ENCODE measurements at regions of chr16 and their contacts with region 1.

Region 1: DNA sequence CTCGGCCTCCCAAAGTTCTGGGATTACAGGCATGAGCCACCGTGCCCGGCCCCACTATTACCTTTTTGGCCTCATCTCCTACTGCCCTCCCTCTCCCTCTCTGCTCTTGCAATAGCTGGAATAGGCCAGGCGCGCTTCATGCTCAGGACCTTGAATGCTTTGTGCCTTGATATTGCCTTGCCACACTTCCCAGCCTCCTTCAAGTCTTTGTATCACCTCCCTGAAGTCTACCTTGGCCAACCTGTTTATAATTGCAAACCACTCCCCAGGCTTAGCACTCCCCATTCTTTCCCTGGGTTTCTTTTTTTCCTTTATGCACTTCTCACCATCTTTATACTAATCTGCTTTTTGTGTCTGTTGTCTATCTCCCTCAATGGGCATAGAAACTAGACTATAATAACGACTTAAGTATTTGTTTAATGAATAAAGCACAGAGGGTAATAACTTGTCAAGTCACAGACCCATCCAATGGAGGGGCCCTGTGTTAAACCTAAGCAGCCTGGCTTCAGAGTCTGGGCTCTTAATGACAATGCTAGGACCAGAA is 6.6 kb downstream of the OGFOD1 start:
- DNase-seq: no peak
- ATAC-seq: no peak

Region 2: GRCh38 chr16:56481468-56482112 is 23.6 kb after region 1 on chr16:
- intact Hi-C with region 1: loop called (anchors 2 kb)
- DNase-seq: no peak
- ATAC-seq: no peak

Region 3: DNA sequence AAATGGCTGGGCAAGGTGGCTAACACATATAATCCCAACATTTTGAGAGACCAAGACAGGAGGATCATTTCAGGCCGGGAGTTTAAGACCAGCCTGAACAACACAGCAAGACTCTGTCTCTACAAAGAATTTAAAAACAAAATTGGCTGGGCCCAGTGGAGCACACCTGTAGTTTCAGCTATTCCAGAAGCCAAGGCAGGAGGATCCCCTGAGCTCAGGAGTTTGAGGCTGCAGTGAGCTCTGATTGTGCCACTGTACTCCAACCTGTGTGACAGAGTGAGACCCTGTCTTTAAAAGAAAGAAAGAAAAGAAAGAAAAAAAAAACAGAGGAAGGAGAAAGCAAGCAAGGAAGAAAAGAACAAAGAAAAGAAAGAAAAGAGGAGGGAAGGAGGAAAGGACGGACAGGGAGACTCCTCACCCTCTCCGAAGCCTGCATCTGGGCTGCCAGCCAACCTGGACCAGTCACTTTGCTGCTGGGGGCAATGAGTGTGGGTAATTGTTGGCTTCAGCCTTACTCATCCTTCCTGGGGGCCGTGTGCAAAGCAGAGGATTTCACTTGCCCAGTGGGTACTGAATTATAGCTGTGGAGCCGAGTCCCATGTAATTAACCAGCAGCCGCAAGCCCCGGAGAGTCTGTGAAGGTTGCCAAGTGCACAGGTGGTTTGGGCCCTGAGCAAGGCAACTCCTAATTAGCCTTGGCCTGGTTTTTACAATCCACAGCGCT is 100.2 kb after region 1 on chr16:
- intact Hi-C with region 1: no loop called
- DNase-seq: no peak
- ATAC-seq: no peak